ENCODE measurements at regions of chr1 and their contacts with region 1.

Region 1: GRCh38 chr1:111570781-111571181 is 48.8 kb upstream of the RAP1A start:
- DNase-seq: peak; percentile 73
- H3K4me3 Mint-ChIP-seq: no peak overlapping the region
- H3K27ac Mint-ChIP-seq: peak overlapping the region; percentile 4
- H3K4me1 Mint-ChIP-seq: peaks cover 19% of the 10 kb centered on the region
- H3K27me3 Mint-ChIP-seq: no peaks in the 10 kb centered on the region

Region 2: DNA sequence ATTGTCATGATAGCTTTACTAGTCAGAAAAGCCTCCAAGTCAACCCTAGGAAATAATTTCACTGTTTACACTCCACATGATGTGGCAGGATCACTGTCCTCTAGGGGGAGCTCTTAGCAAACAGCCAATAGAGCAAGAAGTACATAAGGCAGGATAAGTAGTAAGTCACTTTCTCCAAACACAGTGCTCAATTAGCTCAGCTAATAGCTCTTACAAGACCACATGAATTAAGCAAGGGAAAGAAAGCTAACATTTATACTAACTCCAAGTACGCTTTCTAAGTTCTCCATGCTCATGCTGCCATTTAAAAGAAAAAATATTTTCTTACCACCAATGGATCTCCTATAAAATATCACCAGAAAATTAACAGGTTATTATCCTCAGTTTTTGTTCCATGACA is 540.2 kb before region 1 on chr1:
- intact Hi-C with region 1: loop called (anchors 5 kb)
- DNase-seq: peak; percentile 89
- H3K4me3 Mint-ChIP-seq: no peak overlapping the region
- H3K27ac Mint-ChIP-seq: no peak overlapping the region
- H3K4me1 Mint-ChIP-seq: no peaks in the 10 kb centered on the region
- H3K27me3 Mint-ChIP-seq: peaks cover 41% of the 10 kb centered on the region

Region 3: DNA sequence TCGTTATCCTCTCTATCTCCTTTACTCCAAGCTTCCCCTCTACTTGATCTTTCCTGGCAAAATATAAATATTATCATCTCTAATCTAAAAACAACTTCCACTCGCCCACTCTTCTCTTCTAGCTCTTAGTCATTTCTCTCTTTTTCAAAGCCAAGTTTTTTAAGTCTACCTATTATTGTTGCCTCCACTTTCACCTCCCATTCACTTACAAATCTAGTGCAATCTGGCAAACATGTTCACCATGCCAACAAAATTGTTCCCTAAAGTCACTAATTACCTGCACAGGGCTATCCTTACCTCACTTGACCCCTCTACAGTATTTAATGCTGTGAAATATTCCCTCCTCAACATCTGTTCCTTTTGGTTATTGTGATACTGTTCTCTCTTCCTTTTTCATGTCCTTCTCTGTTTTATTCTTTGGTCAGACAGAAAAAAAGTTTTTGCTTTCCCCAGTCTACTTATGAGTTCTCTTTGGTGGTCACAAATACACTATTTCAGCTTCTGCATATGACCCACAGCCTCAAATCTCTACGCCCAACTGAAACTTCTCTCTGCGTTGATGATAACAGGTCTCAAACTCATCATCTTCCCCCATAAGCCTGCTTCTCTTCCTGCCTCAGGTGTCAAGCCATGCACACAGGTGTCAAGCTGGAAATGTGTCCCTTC is 16.9 kb after region 1 on chr1:
- intact Hi-C with region 1: loop called (anchors 1 kb)
- DNase-seq: no peak
- H3K4me3 Mint-ChIP-seq: no peak overlapping the region
- H3K27ac Mint-ChIP-seq: no peak overlapping the region
- H3K4me1 Mint-ChIP-seq: peaks cover 24% of the 10 kb centered on the region
- H3K27me3 Mint-ChIP-seq: no peaks in the 10 kb centered on the region

Region 4: DNA sequence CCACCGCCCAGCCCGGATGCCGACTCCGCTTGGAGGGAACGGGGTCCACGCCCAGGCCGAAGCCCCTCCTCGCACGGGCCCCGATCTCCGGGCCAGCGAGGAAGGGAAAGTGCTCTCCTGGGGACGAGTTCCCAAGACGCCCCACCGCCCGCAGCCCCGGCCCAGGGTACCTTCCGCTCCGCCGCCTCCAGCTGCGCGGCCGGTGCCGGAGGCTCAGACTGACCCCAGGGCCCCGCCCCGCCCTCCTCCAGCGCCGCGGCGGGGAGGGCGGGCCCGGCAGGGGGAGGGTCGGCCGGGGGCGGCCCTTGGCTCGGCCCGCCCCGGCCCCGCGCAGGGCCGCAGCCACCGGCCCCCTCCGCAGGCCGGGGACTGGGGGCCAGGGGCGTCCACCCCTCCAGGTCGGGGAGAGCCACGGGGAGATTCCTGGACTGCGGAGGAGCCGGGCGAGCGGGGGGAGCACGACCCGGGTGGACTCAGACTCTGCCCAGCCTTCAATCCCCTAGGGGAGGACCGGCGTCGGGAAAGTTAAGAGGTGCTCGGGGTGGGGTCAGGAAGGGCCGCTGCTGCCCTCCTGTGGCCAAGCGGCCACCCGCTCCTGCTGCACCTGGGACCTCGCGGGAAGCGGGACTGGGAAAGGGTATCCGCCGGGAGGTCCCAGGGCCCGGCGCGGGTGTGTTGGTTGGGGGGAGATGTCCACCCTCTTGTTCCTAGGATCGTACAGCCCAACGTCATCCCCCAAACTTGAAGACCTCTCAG is 1136.3 kb after region 1 on chr1 and contains the start of gene RHOC:
- intact Hi-C with region 1: no loop called
- DNase-seq: peak; percentile 91
- H3K4me3 Mint-ChIP-seq: peak within 1 kb of the TSS; percentile 87
- H3K27ac Mint-ChIP-seq: peak within 1 kb of the TSS; percentile 94
- H3K4me1 Mint-ChIP-seq: peaks cover 56% of the 10 kb centered on the region
- H3K27me3 Mint-ChIP-seq: peaks cover 21% of the 10 kb centered on the region
- total RNA-seq, gene RHOC: 48.5 and 53.4 TPM in 2 replicates